ENCODE measurements at regions of chr15 and their contacts with region 1.

Region 1: GRCh38 chr15:78750566-78750965 is 60.7 kb downstream of the ADAMTS7 start:
- DNase-seq: no peak
- ATAC-seq: no peak
- H3K4me3 ChIP-seq: no peak overlapping the region
- H3K27ac ChIP-seq: no peak overlapping the region
- H3K4me1 ChIP-seq: peaks cover 0 to 14% of the 10 kb centered on the region in 2 experiments; a peak in 2 of 5 replicates
- H3K27me3 ChIP-seq: peaks cover 0 to 13% of the 10 kb centered on the region in 2 experiments; a peak in 2 of 5 replicates
- CTCF ChIP-seq: no peak
- EP300 ChIP-seq: no peak
- POLR2A ChIP-seq: no peak
- RAD21 ChIP-seq: no peak

Region 2: GRCh38 chr15:77944002-77944867 is 806.3 kb before region 1 on chr15:
- CTCF ChIA-PET with region 1: no interaction called
- POLR2A ChIA-PET with region 1: no interaction called
- in situ Hi-C with region 1: loop called (anchors 5 kb)
- intact Hi-C with region 1: loop called (anchors 5 kb)
- DNase-seq: peak; percentile 36 to 85 (median 61)
- ATAC-seq: peak; percentile 87
- H3K4me3 ChIP-seq: peak overlapping the region; percentile 37
- H3K27ac ChIP-seq: peak overlapping the region; percentile 41; the same call in 2 of the 3 replicates
- H3K4me1 ChIP-seq: peaks cover 0 to 12% of the 10 kb centered on the region in 2 experiments; a peak in 3 of 5 replicates
- H3K27me3 ChIP-seq: no peaks in the 10 kb centered on the region; a peak in 1 of 5 replicates
- CTCF ChIP-seq: no peak
- EP300 ChIP-seq: no peak; the same call in 1 of the 2 replicates
- POLR2A ChIP-seq: peak; percentile 49; the same call in 1 of the 2 replicates
- RAD21 ChIP-seq: no peak

Region 3: DNA sequence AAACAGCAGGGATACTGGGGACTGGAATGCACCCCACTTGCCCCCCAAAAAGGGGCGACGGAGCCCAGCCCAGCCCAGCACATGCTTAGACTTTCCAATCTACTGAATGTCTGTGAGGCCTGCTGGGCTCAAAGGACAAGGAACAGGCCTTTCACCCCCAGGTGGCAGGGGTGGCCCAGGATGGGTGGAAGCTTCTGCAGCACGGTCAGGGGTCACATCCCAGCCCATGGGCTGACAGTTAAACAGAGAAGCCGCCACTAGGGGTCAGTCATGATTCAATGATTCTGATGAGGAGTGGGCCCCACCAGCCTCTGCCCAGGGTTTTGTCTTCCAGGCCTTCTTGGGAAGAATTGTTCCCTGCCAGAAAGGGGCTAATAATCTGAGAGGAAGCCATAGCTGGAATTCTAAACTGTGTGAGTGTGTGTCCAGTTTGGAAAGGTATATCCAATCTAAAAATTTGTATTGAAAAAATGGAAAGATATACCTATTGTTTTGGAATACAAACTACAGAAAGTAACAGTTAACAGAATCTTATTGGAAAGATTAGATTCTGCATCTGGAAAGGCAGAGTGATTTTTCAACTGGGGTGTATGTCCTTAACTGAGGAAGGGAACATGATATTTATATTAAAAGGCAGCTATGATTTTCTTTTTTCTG is 111.8 kb before region 1 on chr15:
- CTCF ChIA-PET with region 1: interaction called, 3 read pairs
- POLR2A ChIA-PET with region 1: no interaction called
- in situ Hi-C with region 1: no loop called
- intact Hi-C with region 1: loop called (anchors 5 kb)
- DNase-seq: peak; percentile 71 to 76 (median 73)
- ATAC-seq: peak; percentile 89
- H3K4me3 ChIP-seq: no peak overlapping the region
- H3K27ac ChIP-seq: no peak overlapping the region
- H3K4me1 ChIP-seq: peaks cover 3 to 12% of the 10 kb centered on the region in 2 experiments; a peak in 3 of 5 replicates
- H3K27me3 ChIP-seq: peaks cover 9 to 38% of the 10 kb centered on the region in 2 experiments; a peak in 4 of 5 replicates
- CTCF ChIP-seq: peak; percentile 69 to 78 (median 73)
- EP300 ChIP-seq: no peak
- POLR2A ChIP-seq: no peak
- RAD21 ChIP-seq: peak; percentile 47 to 72

Region 4: GRCh38 chr15:78808550-78808949 is 58.0 kb after region 1 on chr15:
- CTCF ChIA-PET with region 1: no interaction called
- POLR2A ChIA-PET with region 1: no interaction called
- in situ Hi-C with region 1: no loop called
- intact Hi-C with region 1: loop called (anchors 5 kb)
- DNase-seq: peak; percentile 48 to 56 (median 54)
- ATAC-seq: peak; percentile 53
- H3K4me3 ChIP-seq: no peak overlapping the region
- H3K27ac ChIP-seq: no peak overlapping the region
- H3K4me1 ChIP-seq: peaks cover 0 to 22% of the 10 kb centered on the region in 2 experiments; a peak in 3 of 5 replicates
- H3K27me3 ChIP-seq: peaks cover 25 to 39% of the 10 kb centered on the region in 2 experiments; a peak in 4 of 5 replicates
- CTCF ChIP-seq: peak; percentile 62 to 76 (median 64)
- EP300 ChIP-seq: no peak
- POLR2A ChIP-seq: no peak
- RAD21 ChIP-seq: peak; percentile 32 to 43

Region 5: GRCh38 chr15:79004336-79004735 is 253.8 kb after region 1 on chr15:
- CTCF ChIA-PET with region 1: no interaction called
- POLR2A ChIA-PET with region 1: no interaction called
- in situ Hi-C with region 1: no loop called
- intact Hi-C with region 1: loop called (anchors 10 kb)
- DNase-seq: peak; percentile 27 to 72 (median 38)
- ATAC-seq: peak; percentile 69
- H3K4me3 ChIP-seq: no peak overlapping the region
- H3K27ac ChIP-seq: peak overlapping the region; percentile 49; the same call in 2 of the 3 replicates
- H3K4me1 ChIP-seq: peaks cover 8 to 14% of the 10 kb centered on the region in 2 experiments
- H3K27me3 ChIP-seq: peaks cover 5 to 15% of the 10 kb centered on the region in 2 experiments; a peak in 3 of 5 replicates
- CTCF ChIP-seq: no peak
- EP300 ChIP-seq: peak; percentile 45; the same call in 1 of the 2 replicates
- POLR2A ChIP-seq: no peak
- RAD21 ChIP-seq: no peak

Measured in K562 (cell line).